ENCODE measurements at regions of chr9 and their contacts with region 1.

Region 1: GRCh38 chr9:83642802-83643201 is 19.9 kb downstream of the IDNK start:
- DNase-seq: peak; percentile 11
- ATAC-seq: peak; percentile 84
- H3K4me3 Mint-ChIP-seq: no peak overlapping the region
- H3K27ac Mint-ChIP-seq: peak overlapping the region; percentile 59
- H3K4me1 Mint-ChIP-seq: 0 out of 2 replicates have a peak, but pooled peaks cover 4% of the 10 kb centered on the region
- H3K27me3 Mint-ChIP-seq: no peaks in the 10 kb centered on the region
- CTCF ChIP-seq: no peak

Region 2: DNA sequence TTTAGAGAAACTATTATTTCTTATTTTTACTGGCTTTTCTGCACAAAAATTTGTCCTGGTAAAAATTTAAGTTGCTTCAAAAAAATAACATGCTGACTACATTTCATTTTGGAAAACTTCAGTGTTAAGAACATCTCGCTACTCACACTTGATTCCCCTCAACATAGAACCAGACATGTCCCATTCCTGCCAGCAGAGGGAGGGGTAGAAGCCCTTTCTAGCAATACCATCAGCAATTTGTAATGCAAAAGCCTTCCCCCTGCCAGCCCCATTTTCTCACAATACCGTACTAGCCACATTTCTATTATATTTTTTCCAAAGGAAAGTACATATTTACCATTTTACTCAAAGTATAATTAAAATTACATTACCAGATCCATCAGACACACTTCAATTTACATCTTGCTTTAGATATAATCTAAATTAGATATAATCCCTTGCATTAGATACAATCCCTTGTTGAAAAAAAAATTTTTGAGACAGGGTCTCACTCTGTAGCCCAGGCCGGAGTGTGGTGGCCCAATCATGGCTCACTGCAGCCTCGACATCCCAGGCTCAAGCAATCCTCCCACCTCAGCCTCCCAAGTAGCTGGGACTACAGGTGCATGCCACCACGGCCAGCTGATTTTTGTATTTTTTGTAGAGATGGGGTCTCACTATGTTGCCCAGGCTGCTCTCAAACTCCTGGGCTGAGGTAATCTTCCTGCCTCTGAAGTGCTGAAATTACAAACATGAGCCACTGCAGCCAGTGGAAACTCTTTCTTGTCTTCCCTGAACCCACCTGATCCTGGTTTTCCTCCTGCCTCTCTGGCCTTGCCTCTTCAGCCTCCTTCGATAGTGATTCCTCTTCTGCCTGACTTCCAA is 59.4 kb before region 1 on chr9:
- CTCF ChIA-PET with region 1: no interaction called
- POLR2A ChIA-PET with region 1: no interaction called
- DNase-seq: peak; percentile 76
- ATAC-seq: peak; percentile 97
- H3K4me3 Mint-ChIP-seq: no peak overlapping the region
- H3K27ac Mint-ChIP-seq: no peak overlapping the region
- H3K4me1 Mint-ChIP-seq: peaks cover 13% of the 10 kb centered on the region
- H3K27me3 Mint-ChIP-seq: no peaks in the 10 kb centered on the region
- CTCF ChIP-seq: peak; percentile 52

Region 3: DNA sequence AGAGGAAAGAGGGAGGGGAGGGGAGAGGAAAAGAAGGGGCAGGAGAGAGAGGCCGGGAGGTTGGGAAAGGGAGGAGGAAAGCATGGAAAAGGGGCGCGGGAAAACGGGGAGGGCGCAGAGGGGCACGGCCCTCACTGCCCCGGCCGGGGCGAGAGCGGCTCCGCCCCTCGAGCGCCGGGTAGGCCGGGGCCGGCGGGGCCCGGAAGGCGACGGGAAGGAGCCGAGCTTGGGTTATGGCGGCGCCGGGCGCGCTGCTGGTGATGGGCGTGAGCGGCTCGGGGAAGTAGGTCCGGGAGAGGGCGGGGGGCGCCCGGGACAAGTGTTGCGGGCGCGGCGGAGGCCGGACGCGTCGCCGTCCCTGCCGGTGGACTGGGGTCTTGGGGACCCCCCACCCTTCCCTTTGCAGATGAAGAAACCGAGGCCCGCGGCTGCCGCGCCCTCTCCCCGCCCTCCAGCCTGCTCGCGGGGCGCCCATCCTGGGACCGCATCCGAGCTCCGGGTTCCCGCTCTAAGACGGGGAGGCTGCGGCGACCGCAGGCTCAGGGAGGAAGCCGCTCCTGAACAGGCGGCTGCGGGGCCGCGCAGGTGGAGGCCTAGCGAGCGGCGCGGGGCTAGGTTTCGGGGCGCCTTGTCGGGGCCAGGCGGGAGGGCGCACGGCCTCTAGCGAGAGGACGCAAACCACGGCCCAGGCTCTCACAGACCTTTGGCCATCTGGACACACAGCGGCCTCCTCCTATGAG is 19.7 kb before region 1 on chr9 and contains the start of gene IDNK:
- CTCF ChIA-PET with region 1: interaction called, 71 read pairs
- POLR2A ChIA-PET with region 1: no interaction called
- DNase-seq: peak; percentile 69
- ATAC-seq: peak; percentile 83
- H3K4me3 Mint-ChIP-seq: peak within 1 kb of the TSS; percentile 80
- H3K27ac Mint-ChIP-seq: no peak within 1 kb of the TSS
- H3K4me1 Mint-ChIP-seq: peaks cover 17% of the 10 kb centered on the region
- H3K27me3 Mint-ChIP-seq: peaks cover 8% of the 10 kb centered on the region
- CTCF ChIP-seq: no peak
- total RNA-seq, gene IDNK: 0.50 to 0.78 TPM (median 0.69 TPM) in 3 replicates

Measured in WTC11 (cell line).